ENCODE measurements at regions of chr17 and their contacts with region 1.

Region 1: DNA sequence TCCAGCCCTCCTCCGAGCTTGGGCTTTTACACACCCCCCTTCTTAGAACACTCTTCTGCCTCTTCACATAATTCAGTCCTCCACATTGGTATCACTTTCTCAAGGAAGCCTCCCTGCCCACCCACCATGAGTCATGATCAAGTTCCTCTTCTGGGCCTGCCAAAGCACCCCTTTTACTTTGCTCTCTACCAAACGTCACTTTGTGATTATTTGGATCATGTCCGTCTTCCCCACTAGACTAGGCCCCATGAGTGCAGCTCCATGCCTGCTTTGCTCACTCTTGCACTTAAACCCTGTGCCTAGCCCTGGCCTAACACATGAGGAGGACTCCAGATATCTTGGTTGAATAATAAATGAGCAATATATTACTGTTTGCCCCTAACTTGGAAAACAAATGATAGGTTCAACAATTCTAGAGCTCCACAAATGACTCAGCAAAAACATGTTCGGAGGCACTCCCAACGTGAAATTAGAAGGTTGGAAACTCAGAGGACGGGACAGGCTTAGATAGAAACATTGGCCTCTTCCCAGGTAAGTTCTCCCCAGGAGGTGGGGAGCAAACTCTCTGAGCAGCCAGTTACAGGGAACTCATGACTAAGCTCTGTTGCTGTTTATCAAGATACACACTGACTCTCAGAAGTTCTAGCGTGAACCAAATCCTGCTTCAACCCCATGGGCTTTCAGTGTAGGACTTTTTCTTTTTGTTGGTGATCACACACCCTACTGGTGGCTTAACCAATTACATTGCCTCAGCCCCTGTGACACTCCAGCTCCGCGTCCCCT is 28.3 kb downstream of the G6PC1 start:
- DNase-seq: peak; percentile 57 to 72
- H3K4me3 ChIP-seq: no peak overlapping the region
- H3K27ac ChIP-seq: peak overlapping the region; percentile 59
- H3K4me1 ChIP-seq: peaks cover 8% of the 10 kb centered on the region
- H3K27me3 ChIP-seq: no peaks in the 10 kb centered on the region
- CTCF ChIP-seq: peak; percentile 65

Region 2: GRCh38 chr17:42878123-42878880 is 50.6 kb before region 1 on chr17:
- CTCF ChIA-PET with region 1: interaction called, 3 read pairs
- POLR2A ChIA-PET with region 1: interaction called, 14 read pairs
- intact Hi-C with region 1: no loop called
- DNase-seq: peak; percentile 63 to 67
- H3K4me3 ChIP-seq: no peak overlapping the region
- H3K27ac ChIP-seq: no peak overlapping the region
- H3K4me1 ChIP-seq: peaks cover 6% of the 10 kb centered on the region; the same call in 1 of the 2 replicates
- H3K27me3 ChIP-seq: peaks cover 36% of the 10 kb centered on the region
- CTCF ChIP-seq: no peak

Region 3: DNA sequence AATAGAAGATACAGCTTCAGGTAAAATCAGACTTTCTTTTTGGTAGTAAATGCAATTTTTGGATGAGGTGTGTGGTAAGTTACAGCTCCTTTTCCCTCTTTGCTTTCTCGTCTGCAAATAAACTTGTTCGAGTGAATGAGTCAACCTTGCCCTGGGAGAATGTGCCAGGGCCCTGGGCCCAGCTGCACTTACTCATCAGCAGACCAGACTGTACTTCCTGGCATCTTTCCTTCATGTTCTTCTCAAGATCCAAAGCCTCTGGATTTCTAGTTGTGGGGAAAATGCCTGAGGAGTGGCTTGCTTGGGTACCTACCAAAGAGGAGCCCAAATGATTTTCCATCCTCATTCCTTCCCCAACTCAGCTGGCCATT is 33.7 kb before region 1 on chr17:
- CTCF ChIA-PET with region 1: interaction called, 15 read pairs
- POLR2A ChIA-PET with region 1: no interaction called
- intact Hi-C with region 1: no loop called
- DNase-seq: peak; percentile 36 to 72
- H3K4me3 ChIP-seq: 0 out of 2 replicates have a peak overlapping the region, but pooled peaks have one; percentile 14
- H3K27ac ChIP-seq: no peak overlapping the region
- H3K4me1 ChIP-seq: peaks cover 12% of the 10 kb centered on the region
- H3K27me3 ChIP-seq: no peaks in the 10 kb centered on the region
- CTCF ChIP-seq: no peak

Region 4: GRCh38 chr17:42964161-42964932 is 35.4 kb after region 1 on chr17 and contains the start of gene AARSD1:
- CTCF ChIA-PET with region 1: no interaction called
- POLR2A ChIA-PET with region 1: interaction called, 13 read pairs
- intact Hi-C with region 1: no loop called
- DNase-seq: peak; percentile 87 to 93
- H3K4me3 ChIP-seq: peak within 1 kb of the TSS; percentile 96
- H3K27ac ChIP-seq: peak within 1 kb of the TSS; percentile 83
- H3K4me1 ChIP-seq: peaks cover 8% of the 10 kb centered on the region; the same call in 1 of the 2 replicates
- H3K27me3 ChIP-seq: no peaks in the 10 kb centered on the region
- CTCF ChIP-seq: no peak
- total RNA-seq, gene AARSD1: 32.6 and 35.4 TPM in 2 replicates